ENCODE measurements at regions of chr10 and their contacts with region 1.

Region 1: GRCh38 chr10:15725603-15726002 is 5.9 kb upstream of the ITGA8 start:
- DNase-seq: no peak
- ATAC-seq: peak; percentile 78
- H3K4me3 ChIP-seq: no peak overlapping the region
- H3K27ac ChIP-seq: no peak overlapping the region
- H3K4me1 ChIP-seq: no peaks in the 10 kb centered on the region
- H3K27me3 ChIP-seq: no peaks in the 10 kb centered on the region

Region 2: DNA sequence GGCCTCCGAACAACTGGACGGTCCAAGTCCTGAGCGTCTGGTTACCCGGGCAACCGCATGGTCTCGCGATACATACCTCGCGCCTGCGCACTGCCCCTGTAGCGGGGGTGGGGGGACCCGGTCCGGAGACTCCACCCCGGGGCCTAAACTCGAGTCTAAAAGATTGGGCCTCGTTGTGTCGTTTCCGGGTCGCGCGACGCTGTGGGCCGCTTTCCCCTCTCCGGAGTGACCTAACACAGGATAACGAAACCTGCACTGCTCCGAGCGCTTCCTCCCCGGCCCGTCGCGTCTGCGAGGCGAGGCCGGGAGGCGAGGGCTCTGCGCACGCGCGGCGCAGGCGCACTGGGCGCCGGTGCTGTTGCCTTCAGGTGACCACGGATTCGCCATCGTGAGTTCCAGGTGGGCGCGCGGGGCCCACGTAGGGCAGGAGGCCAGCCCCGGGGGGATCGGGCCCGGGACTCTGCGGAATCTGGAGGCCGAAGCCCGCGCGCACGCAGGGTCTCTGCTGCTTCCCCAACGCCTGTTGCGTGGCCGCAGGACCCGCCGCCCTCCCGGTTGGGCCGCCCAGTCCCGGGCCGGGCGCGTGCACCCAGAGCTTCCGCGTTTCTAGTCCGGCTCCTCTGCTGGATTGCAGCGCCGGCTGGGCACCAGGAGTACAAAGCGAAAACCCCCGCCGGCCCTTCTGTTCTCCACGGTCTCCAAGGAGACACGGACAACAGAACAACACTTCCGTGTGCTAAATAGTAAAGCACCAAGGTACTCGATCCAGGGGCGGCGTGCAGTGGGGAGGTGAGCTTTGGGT is 628.4 kb before region 1 on chr10 and contains the start of gene RPP38:
- intact Hi-C with region 1: no loop called
- DNase-seq: peak; percentile 97 to 99 (median 98)
- ATAC-seq: peak; percentile 98
- H3K4me3 ChIP-seq: peak within 1 kb of the TSS; percentile 83
- H3K27ac ChIP-seq: peak within 1 kb of the TSS; percentile 96
- H3K4me1 ChIP-seq: peaks cover 4% of the 10 kb centered on the region
- H3K27me3 ChIP-seq: no peaks in the 10 kb centered on the region
- total RNA-seq, gene RPP38: 8.3 to 12.2 (median 9.8) TPM

Region 3: DNA sequence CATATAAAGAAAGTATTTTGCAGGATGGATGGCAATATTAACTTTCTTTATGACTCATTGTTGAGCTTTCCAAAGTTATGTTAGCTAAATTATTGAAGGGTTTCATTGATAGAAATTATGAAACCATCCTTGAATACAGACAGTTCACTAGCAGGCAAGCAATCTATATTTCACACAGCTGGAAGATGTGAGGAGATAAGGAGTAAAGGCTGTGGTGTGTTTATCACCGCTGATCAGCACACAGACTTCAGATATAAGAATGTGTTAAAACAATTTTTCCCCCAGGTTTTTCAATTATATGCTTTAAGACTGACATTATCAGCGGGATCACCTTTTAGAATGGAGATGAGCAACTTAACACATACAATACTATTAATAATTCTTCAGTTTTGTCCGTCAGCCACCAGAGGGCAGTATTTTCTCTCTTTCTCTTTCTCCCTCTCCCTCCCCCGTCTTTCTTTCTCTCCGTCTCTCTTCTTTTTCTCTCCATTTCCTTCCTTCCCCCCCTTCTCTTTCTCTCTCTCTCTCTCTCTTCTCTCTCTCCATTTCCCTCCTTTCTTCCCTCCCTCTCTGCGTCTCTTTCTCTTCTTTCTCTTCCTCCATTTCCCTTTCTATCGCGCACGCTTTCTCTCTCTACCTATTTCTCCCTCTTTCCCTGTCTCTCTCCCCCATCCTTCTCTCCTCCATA is 291.6 kb before region 1 on chr10:
- intact Hi-C with region 1: loop called in 3 of 4 experiments (anchors 5 kb)
- DNase-seq: no peak
- ATAC-seq: peak; percentile 72 to 77
- H3K4me3 ChIP-seq: peak overlapping the region; percentile 40
- H3K27ac ChIP-seq: no peak overlapping the region
- H3K4me1 ChIP-seq: no peaks in the 10 kb centered on the region
- H3K27me3 ChIP-seq: no peaks in the 10 kb centered on the region

Region 4: GRCh38 chr10:15439341-15439842 is 286.2 kb before region 1 on chr10:
- intact Hi-C with region 1: loop called in 3 of 4 experiments (anchors 5 kb)
- DNase-seq: peak; percentile 80 to 89 (median 83)
- ATAC-seq: peak; percentile 93 to 97
- H3K4me3 ChIP-seq: peak overlapping the region; percentile 39
- H3K27ac ChIP-seq: peak overlapping the region; percentile 54
- H3K4me1 ChIP-seq: peaks cover 2% of the 10 kb centered on the region
- H3K27me3 ChIP-seq: no peaks in the 10 kb centered on the region

Region 5: GRCh38 chr10:15813415-15813814 is 87.8 kb after region 1 on chr10:
- intact Hi-C with region 1: no loop called
- DNase-seq: no peak
- ATAC-seq: no peak
- H3K4me3 ChIP-seq: no peak overlapping the region
- H3K27ac ChIP-seq: no peak overlapping the region
- H3K4me1 ChIP-seq: no peaks in the 10 kb centered on the region
- H3K27me3 ChIP-seq: no peaks in the 10 kb centered on the region

Region 6: DNA sequence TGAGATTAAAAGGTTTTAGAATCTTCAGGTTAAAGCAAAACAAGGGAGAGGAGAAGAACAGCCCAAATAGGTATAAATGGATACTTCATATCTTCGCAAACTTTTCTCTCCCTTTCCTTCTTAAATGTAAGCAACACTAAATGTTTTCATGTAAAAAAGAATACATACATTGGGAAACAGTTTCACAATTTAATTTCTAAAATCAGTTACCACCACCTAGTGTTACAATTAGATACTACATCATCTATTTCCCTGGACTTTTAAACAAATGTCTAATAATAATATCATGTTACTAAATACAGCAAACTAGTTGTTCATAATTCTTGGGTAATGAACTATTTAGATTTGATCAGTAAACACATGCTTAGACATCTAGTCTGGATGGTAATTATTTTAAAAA is 98.9 kb after region 1 on chr10:
- intact Hi-C with region 1: loop called in 1 of 4 experiments (anchors 10 kb)
- DNase-seq: no peak
- ATAC-seq: no peak
- H3K4me3 ChIP-seq: no peak overlapping the region
- H3K27ac ChIP-seq: no peak overlapping the region
- H3K4me1 ChIP-seq: no peaks in the 10 kb centered on the region
- H3K27me3 ChIP-seq: no peaks in the 10 kb centered on the region

Region 7: GRCh38 chr10:15931375-15931774 is 205.8 kb after region 1 on chr10:
- intact Hi-C with region 1: no loop called
- DNase-seq: no peak
- ATAC-seq: no peak
- H3K4me3 ChIP-seq: no peak overlapping the region
- H3K27ac ChIP-seq: no peak overlapping the region
- H3K4me1 ChIP-seq: no peaks in the 10 kb centered on the region
- H3K27me3 ChIP-seq: no peaks in the 10 kb centered on the region